Gastrocnemius medialis (tissue), 4 donors: ENCODE measurements at regions of chr12 and their contacts with region 1.

Region 1: GRCh38 chr12:119412811-119413794 is 78.6 kb downstream of the CCDC60 start:
- DNase-seq: peak; percentile 23 to 53
- ATAC-seq: peak in 1 of 2 donors; percentile 84
- H3K4me3 ChIP-seq: no peak overlapping the region
- H3K27ac ChIP-seq: no peak overlapping the region
- H3K4me1 ChIP-seq: no peaks in the 10 kb centered on the region
- H3K27me3 ChIP-seq: no peaks in the 10 kb centered on the region
- CTCF ChIP-seq: peak; percentile 72 to 89 (median 81)
- POLR2A ChIP-seq: no peak

Region 2: GRCh38 chr12:118979763-118980406 is 433.2 kb before region 1 on chr12:
- in situ Hi-C with region 1: loop called in 1 of 4 experiments (anchors 10 kb)
- intact Hi-C with region 1: loop called (anchors 2 kb)
- DNase-seq: no peak
- ATAC-seq: peak in 1 of 2 donors; percentile 26
- H3K4me3 ChIP-seq: no peak overlapping the region
- H3K27ac ChIP-seq: no peak overlapping the region
- H3K4me1 ChIP-seq: peaks cover 0 to 3% of the 10 kb centered on the region in 2 donors
- H3K27me3 ChIP-seq: peaks cover 42 to 53% (median 46%) of the 10 kb centered on the region in 3 donors
- CTCF ChIP-seq: peak; percentile 38 to 61 (median 50)
- POLR2A ChIP-seq: no peak

Region 3: DNA sequence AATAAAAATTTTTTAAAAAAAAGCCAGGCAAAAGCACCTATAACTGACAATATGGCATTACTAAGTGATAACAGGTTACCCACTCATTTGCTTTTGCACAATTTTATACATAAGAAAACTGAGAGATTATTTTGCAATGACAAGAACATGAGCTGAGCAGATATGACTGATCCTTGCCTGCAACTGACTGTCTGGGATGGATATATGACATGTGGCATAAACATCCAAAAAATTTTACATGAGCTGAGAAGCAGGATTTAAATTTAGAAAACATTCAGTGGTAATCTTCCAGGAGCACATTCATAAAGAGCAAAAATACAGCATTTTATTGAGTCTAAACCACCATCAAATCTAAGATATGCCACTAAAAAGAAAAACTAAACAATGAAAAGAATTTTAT is 55.2 kb after region 1 on chr12:
- in situ Hi-C with region 1: no loop called
- intact Hi-C with region 1: no loop called
- DNase-seq: no peak
- ATAC-seq: no peak
- H3K4me3 ChIP-seq: no peak overlapping the region
- H3K27ac ChIP-seq: no peak overlapping the region
- H3K4me1 ChIP-seq: no peaks in the 10 kb centered on the region
- H3K27me3 ChIP-seq: no peaks in the 10 kb centered on the region
- CTCF ChIP-seq: no peak
- POLR2A ChIP-seq: no peak